ENCODE measurements at regions of chr3 and their contacts with region 1.

Region 1: DNA sequence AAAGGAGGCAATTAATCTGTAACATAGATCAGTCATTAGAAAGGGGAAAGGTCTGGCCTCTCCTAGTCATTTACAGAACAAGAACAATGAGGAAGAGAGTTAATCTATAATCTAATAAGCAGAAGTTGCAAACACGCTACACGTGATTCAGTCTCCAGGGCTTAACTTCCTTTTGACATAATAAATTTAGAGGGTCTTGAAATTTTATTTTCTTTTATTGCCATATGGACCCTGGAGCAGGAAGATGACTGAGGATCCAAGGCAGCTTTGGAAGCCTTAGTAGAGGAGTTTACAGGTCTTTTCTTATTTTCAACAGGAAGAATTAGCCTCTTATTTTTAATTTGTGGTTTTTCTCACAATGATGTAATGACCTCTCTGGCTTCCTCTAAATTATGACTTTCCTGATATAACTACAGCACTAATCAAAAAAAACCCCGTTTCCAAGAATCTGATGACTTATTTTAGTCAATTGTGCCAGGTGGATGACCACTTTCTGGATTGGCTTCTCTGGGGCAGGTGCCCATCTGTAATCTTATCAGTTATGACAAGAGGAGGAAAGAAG is 32.2 kb downstream of the ADGRG7 start:
- DNase-seq: no peak
- ATAC-seq: no peak
- H3K4me3 ChIP-seq: no peak overlapping the region
- H3K4me3 Mint-ChIP-seq: no peak overlapping the region
- H3K27ac ChIP-seq: no peak overlapping the region
- H3K27ac Mint-ChIP-seq: no peak overlapping the region
- H3K4me1 ChIP-seq: no peaks in the 10 kb centered on the region
- H3K4me1 Mint-ChIP-seq: no peaks in the 10 kb centered on the region
- H3K27me3 ChIP-seq: no peaks in the 10 kb centered on the region
- H3K27me3 Mint-ChIP-seq: no peaks in the 10 kb centered on the region
- CTCF ChIP-seq: no peak

Region 2: GRCh38 chr3:100656945-100657344 is 15.4 kb after region 1 on chr3:
- CTCF ChIA-PET with region 1: interaction called, 5 read pairs
- POLR2A ChIA-PET with region 1: interaction called, 4 read pairs
- intact Hi-C with region 1: loop called (anchors 1 to 2 kb)
- DNase-seq: no peak
- ATAC-seq: no peak
- H3K4me3 ChIP-seq: no peak overlapping the region
- H3K4me3 Mint-ChIP-seq: no peak overlapping the region
- H3K27ac ChIP-seq: no peak overlapping the region
- H3K27ac Mint-ChIP-seq: no peak overlapping the region
- H3K4me1 ChIP-seq: no peaks in the 10 kb centered on the region
- H3K4me1 Mint-ChIP-seq: no peaks in the 10 kb centered on the region
- H3K27me3 ChIP-seq: no peaks in the 10 kb centered on the region
- H3K27me3 Mint-ChIP-seq: no peaks in the 10 kb centered on the region
- CTCF ChIP-seq: no peak

Region 3: DNA sequence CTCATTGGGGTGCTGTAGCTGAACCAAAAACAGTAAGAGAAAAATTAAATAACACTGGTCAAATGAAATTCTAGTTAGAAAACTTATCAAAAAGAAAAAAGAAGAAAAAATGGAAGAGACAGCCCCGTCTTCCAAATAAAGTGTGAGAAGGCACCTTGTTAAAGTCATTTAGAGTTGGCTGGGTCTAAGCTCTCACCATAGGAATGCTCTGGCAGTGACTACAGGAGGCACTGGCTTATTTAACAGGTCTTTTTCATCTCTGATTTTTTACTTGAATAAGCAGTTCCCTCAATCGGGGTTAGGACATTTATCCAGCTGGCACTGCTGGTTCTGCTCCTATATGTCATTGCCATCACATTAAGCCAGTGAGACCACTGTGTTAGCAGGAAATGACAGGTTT is 353.3 kb after region 1 on chr3:
- CTCF ChIA-PET with region 1: no interaction called
- POLR2A ChIA-PET with region 1: no interaction called
- intact Hi-C with region 1: no loop called
- DNase-seq: no peak
- ATAC-seq: no peak
- H3K4me3 ChIP-seq: no peak overlapping the region
- H3K4me3 Mint-ChIP-seq: no peak overlapping the region
- H3K27ac ChIP-seq: no peak overlapping the region
- H3K27ac Mint-ChIP-seq: no peak overlapping the region
- H3K4me1 ChIP-seq: no peaks in the 10 kb centered on the region
- H3K4me1 Mint-ChIP-seq: no peaks in the 10 kb centered on the region
- H3K27me3 ChIP-seq: no peaks in the 10 kb centered on the region
- H3K27me3 Mint-ChIP-seq: peaks cover 5% of the 10 kb centered on the region
- CTCF ChIP-seq: no peak

Region 4: DNA sequence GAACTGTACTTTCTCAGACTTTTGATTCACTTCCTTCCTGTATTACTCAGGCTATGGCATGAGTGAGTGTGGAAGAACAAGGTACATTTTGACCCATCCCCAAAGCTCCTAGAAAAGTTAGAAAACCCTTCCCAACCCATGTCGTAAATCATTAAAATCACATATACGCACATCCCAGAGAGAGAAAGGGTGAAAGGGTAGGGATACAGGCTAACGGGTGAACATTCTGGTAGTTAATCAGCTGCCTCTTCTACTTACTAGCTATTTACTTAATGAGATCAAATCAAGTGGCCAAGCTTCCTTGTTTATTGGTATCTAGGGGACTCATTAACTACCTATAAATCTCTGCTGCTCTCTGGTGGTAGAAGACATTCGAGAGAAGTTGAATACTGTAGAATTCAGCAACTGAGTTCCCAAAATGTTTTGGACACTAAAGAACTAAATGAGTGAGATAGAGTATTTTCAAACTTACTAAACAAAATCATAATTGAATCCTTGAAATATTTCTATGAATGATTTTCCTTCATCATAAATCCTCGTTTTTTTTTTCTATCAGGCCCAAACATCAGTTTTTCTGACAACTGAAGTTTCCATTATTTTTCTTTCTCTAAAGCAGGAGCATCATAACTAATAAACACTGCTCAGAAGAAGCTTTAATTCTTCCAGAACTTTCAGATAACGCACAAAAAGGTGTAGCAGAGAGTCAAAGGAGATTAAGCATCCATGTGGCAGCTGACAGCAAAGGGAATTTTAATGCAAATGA is 554.6 kb after region 1 on chr3:
- CTCF ChIA-PET with region 1: no interaction called
- POLR2A ChIA-PET with region 1: no interaction called
- intact Hi-C with region 1: no loop called
- DNase-seq: peak in 2 of 9 experiments; percentile 1 to 2
- ATAC-seq: no peak
- H3K4me3 ChIP-seq: no peak overlapping the region
- H3K4me3 Mint-ChIP-seq: no peak overlapping the region
- H3K27ac ChIP-seq: no peak overlapping the region
- H3K27ac Mint-ChIP-seq: no peak overlapping the region
- H3K4me1 ChIP-seq: no peaks in the 10 kb centered on the region
- H3K4me1 Mint-ChIP-seq: no peaks in the 10 kb centered on the region
- H3K27me3 ChIP-seq: no peaks in the 10 kb centered on the region
- H3K27me3 Mint-ChIP-seq: no peaks in the 10 kb centered on the region
- CTCF ChIP-seq: no peak